ENCODE measurements at regions of chr14 and their contacts with region 1.

Region 1: DNA sequence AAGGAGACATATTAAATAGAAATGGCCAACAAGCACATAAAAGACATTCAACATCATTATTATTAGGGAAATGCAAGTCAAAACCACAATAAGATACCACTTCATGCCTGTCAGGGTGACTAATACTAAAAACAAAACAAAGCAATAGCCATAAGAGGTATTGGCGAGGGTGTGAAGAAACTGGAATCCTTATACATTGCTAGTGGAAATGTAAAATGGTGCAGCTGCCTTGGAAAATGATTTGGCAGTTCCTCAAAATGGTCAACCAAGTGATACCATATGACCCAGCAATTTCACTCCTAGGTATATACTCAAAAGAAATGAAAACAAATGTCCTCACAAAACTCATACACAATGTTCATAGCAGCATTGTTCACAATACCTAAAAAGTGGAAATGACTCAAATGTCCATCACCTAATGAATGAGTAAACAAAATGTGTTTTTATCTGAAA is 27.0 kb downstream of the GPR135 start:
- DNase-seq: no peak
- ATAC-seq: no peak

Region 2: DNA sequence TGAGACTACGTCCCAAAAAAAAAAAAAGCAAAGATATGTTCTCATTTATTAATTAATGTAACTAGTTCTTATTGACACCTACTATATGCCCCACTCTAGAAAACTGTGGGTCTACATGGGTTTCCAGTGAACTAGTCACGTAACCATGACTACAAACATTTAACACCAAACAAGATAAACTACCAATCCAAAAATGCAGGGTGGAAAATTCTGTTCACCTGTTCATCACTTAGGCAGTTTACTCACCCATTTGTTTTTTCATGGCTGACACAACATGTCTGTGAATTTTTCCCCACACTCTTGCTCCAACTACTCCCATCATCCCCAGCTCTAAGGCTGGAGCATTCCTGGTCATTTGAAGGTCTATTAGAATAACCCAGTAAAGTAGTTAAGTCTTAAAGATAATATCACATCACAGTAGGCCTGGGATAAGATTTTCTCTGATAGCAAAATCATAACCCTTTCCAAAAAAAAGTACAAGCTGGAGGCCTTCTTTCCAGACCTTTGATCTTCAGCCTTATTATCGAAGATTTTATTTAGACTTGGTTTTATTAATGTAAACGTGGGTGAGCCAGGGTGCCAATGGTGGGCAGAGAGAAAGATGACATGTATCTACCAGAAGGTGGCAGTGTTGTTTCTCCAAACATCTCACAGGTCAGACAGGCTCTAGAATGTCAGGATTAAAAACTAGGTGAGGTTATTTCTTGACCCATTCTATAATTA is 311.4 kb before region 1 on chr14:
- intact Hi-C with region 1: loop called in 1 of 2 experiments (anchors 5 kb)
- DNase-seq: no peak
- ATAC-seq: peak; percentile 81

Measured in left colon (tissue), 2 donors.